ENCODE measurements at regions of chr1 and their contacts with region 1.

Region 1: DNA sequence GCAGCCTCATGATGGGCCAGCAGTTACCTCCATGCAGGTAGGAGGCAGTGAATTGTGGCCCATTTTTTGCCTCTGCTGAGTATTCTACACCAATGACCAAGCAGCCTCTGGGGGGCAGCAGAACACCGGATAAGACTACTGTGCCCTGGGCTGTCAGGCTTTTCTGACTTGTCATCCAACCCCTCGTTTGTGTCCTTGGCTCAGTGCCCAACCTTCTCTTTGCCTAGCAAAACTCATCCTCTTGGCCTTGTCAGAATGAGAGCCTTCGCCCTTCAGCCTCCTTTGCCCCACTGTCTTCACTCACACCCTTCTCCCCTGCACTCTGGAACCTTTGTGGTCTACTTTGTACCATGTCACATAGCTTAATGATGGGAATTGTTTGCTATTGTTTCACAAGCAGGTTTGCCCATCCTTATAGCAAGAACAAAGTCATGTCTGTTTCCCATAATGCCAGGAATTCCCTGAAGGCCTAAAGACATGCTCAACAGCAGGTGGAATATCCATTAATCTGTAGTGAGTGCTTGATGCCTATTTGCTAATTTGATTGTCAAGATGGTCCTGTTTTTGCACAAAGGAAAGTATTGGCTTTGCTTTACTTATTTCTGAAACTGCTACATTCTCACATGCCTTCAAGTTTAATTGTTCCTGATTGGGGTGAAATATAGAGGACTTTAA is 255.9 kb downstream of the HHAT start:
- DNase-seq: peak; percentile 89
- H3K4me3 Mint-ChIP-seq: no peak overlapping the region
- H3K27ac Mint-ChIP-seq: no peak overlapping the region
- H3K4me1 Mint-ChIP-seq: no peaks in the 10 kb centered on the region
- H3K27me3 Mint-ChIP-seq: peaks cover 3% of the 10 kb centered on the region

Region 2: DNA sequence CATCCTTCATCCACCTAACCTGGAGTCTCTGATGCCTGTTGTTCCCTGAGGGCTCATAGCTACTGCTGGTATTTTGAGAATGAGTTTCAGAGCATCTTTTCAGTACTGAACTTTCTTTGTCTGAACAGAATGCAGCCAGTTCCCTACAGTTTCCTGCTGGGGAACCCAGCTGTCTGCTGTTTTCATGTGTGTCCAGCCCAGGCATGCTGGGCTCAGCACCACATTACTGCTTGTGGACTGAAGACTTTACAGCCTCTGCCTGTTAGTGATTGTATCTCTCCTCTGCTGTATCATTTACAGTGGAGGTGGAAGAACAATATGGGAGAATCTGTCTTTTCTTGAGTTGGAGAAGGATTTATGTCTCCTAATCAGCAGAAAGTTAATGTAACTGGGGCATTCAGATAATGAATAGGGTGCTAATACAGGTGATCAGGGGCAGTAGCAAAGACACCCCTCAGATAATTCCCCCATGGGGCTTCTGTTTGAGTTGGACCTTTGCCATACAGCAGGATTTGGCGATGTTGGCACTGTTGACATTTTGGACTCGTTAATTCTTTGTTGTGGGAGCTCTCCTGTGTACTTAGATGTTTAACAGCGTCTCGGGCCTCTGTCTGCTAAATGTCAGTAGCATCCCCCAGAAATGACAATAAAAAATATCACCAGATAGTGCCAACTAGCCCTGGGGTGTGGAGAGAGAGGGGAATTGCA is 48.2 kb before region 1 on chr1:
- intact Hi-C with region 1: no loop called
- DNase-seq: no peak
- H3K4me3 Mint-ChIP-seq: no peak overlapping the region
- H3K27ac Mint-ChIP-seq: no peak overlapping the region
- H3K4me1 Mint-ChIP-seq: no peaks in the 10 kb centered on the region
- H3K27me3 Mint-ChIP-seq: no peaks in the 10 kb centered on the region

Region 3: DNA sequence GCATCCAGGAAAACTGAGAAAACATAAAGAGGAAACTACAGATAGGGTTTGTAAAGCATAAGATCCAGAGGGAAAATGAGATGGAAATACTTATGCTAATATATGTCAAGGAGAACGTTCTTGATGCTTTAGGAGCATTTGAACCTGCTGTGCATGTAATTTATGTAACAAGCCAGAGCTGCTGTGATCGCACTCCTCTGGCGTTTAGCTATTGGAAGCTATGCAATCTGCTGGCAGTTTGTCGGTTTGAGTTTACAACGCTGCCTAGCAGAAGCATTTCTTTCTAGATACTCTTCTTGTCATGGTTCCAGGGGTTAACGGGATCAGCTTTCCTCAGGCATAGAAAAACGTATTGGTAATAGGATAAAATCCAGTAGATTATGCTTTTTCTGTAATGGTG is 366.7 kb after region 1 on chr1:
- intact Hi-C with region 1: loop called (anchors 1 kb)
- DNase-seq: no peak
- H3K4me3 Mint-ChIP-seq: no peak overlapping the region
- H3K27ac Mint-ChIP-seq: no peak overlapping the region
- H3K4me1 Mint-ChIP-seq: no peaks in the 10 kb centered on the region
- H3K27me3 Mint-ChIP-seq: peaks cover 2% of the 10 kb centered on the region

Region 4: GRCh38 chr1:211654838-211655787 is 1070.5 kb after region 1 on chr1:
- intact Hi-C with region 1: loop called (anchors 5 kb)
- DNase-seq: peak; percentile 94
- H3K4me3 Mint-ChIP-seq: no peak overlapping the region
- H3K27ac Mint-ChIP-seq: no peak overlapping the region
- H3K4me1 Mint-ChIP-seq: peaks cover 6% of the 10 kb centered on the region
- H3K27me3 Mint-ChIP-seq: peaks cover 10% of the 10 kb centered on the region